WTC11 (cell line): ENCODE measurements at regions of chr5 and their contacts with region 1.

Region 1: GRCh38 chr5:170216266-170216864 is 16.4 kb upstream of the C5orf58 start:
- DNase-seq: peak; percentile 31
- ATAC-seq: peak; percentile 87
- H3K4me3 Mint-ChIP-seq: no peak overlapping the region
- H3K27ac Mint-ChIP-seq: no peak overlapping the region
- H3K4me1 Mint-ChIP-seq: peaks cover 22% of the 10 kb centered on the region
- H3K27me3 Mint-ChIP-seq: peaks cover 24% of the 10 kb centered on the region
- CTCF ChIP-seq: peak; percentile 29; the same call in 1 of the 2 replicates

Region 2: DNA sequence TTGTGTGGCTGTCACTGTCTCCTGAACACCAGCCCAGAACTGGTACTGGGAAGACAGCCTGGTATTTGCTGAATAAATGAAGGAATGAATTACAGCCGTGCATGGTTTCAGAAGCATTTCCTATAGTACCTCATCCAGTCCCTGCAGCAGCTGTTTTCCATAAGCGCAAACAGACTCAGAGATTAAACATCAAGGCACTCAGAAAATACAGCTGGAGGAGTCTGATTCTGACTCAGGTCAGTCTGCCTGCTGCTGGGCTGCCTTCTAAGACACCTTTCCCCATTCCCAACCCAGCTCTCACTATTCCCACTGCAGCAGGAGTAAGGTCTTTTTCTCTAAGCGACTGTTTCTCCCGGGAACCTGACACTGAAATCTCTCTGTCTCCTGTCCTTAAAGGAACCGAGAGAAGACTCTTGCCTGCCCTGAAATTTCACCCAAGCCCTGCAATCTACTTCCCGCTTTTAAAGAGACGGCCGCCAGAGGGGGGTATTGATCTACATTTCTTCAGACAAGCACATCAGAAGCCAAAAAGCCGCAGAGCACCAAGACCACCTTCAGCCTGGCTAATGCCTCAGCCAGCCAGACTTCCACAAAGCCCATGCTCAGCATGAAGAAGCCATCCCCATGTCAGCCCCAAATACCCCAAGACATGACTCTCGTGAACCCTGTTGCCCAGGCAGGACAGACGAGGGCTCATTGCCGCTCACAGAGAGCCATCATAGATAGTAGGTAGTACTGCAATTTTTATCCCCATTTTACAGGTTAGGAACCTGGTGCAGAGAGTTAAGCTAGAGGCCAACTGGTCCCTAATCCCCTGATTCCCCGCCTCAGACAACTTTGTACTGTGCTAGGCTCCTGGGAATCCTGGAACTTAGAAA is 116.1 kb before region 1 on chr5:
- CTCF ChIA-PET with region 1: interaction called, 60 read pairs
- POLR2A ChIA-PET with region 1: no interaction called
- DNase-seq: peak; percentile 90
- ATAC-seq: peak; percentile 89
- H3K4me3 Mint-ChIP-seq: no peak overlapping the region
- H3K27ac Mint-ChIP-seq: no peak overlapping the region
- H3K4me1 Mint-ChIP-seq: peaks cover 8% of the 10 kb centered on the region
- H3K27me3 Mint-ChIP-seq: peaks cover 5% of the 10 kb centered on the region; the same call in 1 of the 2 replicates
- CTCF ChIP-seq: peak; percentile 68

Region 3: DNA sequence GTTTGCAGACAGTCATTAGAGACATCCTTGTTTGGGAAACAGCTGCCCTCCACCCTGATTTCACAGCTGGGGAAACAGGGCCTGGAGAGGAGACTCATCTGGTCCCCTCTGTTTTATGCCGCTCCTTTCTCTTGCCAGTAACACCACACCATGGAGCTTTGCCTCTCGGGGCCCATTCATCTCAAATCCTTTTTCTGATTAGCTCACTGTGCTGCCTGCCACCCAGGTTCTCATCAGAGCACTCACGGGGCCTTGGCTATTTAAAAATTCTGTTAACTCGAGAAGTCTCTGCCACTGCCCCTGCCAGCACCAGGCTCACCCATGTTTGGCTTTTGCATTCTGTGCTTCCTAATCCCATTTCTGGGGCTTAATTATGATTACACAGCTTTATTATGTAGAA is 20.4 kb before region 1 on chr5:
- CTCF ChIA-PET with region 1: interaction called, 16 read pairs
- POLR2A ChIA-PET with region 1: no interaction called
- DNase-seq: no peak
- ATAC-seq: no peak
- H3K4me3 Mint-ChIP-seq: no peak overlapping the region
- H3K27ac Mint-ChIP-seq: no peak overlapping the region
- H3K4me1 Mint-ChIP-seq: peaks cover 11% of the 10 kb centered on the region
- H3K27me3 Mint-ChIP-seq: no peaks in the 10 kb centered on the region
- CTCF ChIP-seq: no peak

Region 4: DNA sequence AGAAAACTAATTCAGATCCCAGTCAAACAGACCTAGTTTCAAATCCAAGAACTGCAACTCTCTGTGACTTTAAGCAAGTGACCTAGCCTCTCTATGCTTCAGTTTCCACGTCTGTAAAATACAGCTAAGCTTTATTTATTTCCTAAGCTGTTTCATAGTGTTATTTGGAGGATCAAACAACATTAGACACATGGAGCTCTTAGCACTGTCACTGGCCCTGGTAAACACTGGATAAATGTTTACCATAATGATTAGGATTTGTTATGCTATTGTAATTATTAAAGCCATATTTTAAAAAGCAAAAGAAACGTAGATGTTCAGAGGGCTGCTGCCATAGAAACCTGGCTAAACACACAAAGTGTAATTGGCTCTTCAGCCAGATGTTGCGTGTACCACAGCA is 10.1 kb before region 1 on chr5:
- CTCF ChIA-PET with region 1: interaction called, 15 read pairs
- POLR2A ChIA-PET with region 1: no interaction called
- DNase-seq: no peak
- ATAC-seq: no peak
- H3K4me3 Mint-ChIP-seq: no peak overlapping the region
- H3K27ac Mint-ChIP-seq: no peak overlapping the region
- H3K4me1 Mint-ChIP-seq: no peaks in the 10 kb centered on the region
- H3K27me3 Mint-ChIP-seq: no peaks in the 10 kb centered on the region
- CTCF ChIP-seq: no peak

Region 5: GRCh38 chr5:170413897-170414296 is 197.5 kb after region 1 on chr5:
- CTCF ChIA-PET with region 1: no interaction called
- POLR2A ChIA-PET with region 1: no interaction called
- DNase-seq: no peak
- ATAC-seq: no peak
- H3K4me3 Mint-ChIP-seq: no peak overlapping the region
- H3K27ac Mint-ChIP-seq: no peak overlapping the region
- H3K4me1 Mint-ChIP-seq: peaks cover 29% of the 10 kb centered on the region
- H3K27me3 Mint-ChIP-seq: no peaks in the 10 kb centered on the region; the same call in 1 of the 2 replicates
- CTCF ChIP-seq: no peak